Calu3 (cell line): ENCODE measurements at regions of chr3 and their contacts with region 1.

Region 1: DNA sequence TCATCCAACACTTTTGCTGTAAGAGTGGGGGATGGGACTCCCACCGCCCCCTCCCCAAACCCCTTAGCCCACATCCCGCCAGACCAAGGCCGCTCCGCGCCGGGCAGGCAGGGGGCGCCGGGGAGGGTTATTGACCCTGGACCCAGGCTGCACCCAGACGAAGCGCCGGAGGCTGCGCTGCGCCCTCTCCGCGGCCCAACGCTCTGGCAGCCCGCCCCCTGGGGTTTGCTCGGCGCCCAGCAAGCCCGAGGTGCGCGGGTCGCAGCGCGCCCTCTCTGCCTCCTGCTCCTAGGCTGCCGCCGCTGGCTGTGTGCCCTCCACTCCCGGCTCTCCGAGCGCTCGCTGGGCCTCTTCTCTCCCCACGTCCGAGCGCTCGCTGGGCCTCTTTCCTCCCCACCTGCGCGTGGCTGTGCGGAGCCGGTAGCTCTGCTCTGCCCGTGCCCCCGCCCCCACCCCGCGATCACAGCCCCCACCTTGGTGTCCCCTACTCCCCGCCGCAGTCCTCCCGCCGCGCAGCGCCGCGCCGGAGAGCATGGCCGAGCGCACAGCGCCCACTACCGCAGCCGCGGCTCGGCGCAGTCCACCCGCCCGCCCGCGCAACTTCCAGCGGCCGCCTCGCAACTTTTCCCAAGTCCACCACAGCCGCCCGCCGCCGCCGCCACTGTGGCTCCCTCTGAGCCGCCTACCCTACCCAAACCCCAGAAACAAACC is 1.2 kb downstream of the MECOM start:
- DNase-seq: peak; percentile 97
- H3K4me3 Mint-ChIP-seq: peak overlapping the region; percentile 79
- H3K27ac Mint-ChIP-seq: peak overlapping the region; percentile 60
- H3K4me1 Mint-ChIP-seq: peaks cover 53% of the 10 kb centered on the region
- H3K27me3 Mint-ChIP-seq: no peaks in the 10 kb centered on the region
- CTCF ChIP-seq: peak; percentile 88

Region 2: GRCh38 chr3:169241991-169242707 is 420.1 kb before region 1 on chr3:
- CTCF ChIA-PET with region 1: interaction called, 3 read pairs
- intact Hi-C with region 1: loop called (anchors 2 kb)
- DNase-seq: peak; percentile 52
- H3K4me3 Mint-ChIP-seq: peak overlapping the region; percentile 78
- H3K27ac Mint-ChIP-seq: peak overlapping the region; percentile 90
- H3K4me1 Mint-ChIP-seq: peaks cover 52% of the 10 kb centered on the region
- H3K27me3 Mint-ChIP-seq: no peaks in the 10 kb centered on the region
- CTCF ChIP-seq: no peak

Region 3: GRCh38 chr3:169348929-169349613 is 313.2 kb before region 1 on chr3:
- CTCF ChIA-PET with region 1: no interaction called
- intact Hi-C with region 1: loop called (anchors 2 kb)
- DNase-seq: peak; percentile 60
- H3K4me3 Mint-ChIP-seq: peak overlapping the region; percentile 65
- H3K27ac Mint-ChIP-seq: peak overlapping the region; percentile 96
- H3K4me1 Mint-ChIP-seq: peaks cover 74% of the 10 kb centered on the region
- H3K27me3 Mint-ChIP-seq: no peaks in the 10 kb centered on the region
- CTCF ChIP-seq: no peak

Region 4: GRCh38 chr3:169564883-169565282 is 97.4 kb before region 1 on chr3:
- CTCF ChIA-PET with region 1: interaction called, 6 read pairs
- intact Hi-C with region 1: loop called (anchors 2 kb)
- DNase-seq: peak; percentile 16
- H3K4me3 Mint-ChIP-seq: no peak overlapping the region
- H3K27ac Mint-ChIP-seq: no peak overlapping the region
- H3K4me1 Mint-ChIP-seq: peaks cover 25% of the 10 kb centered on the region
- H3K27me3 Mint-ChIP-seq: no peaks in the 10 kb centered on the region
- CTCF ChIP-seq: peak; percentile 65

Region 5: GRCh38 chr3:169604568-169604967 is 57.7 kb before region 1 on chr3:
- CTCF ChIA-PET with region 1: interaction called, 10 read pairs
- intact Hi-C with region 1: no loop called
- DNase-seq: peak; percentile 17
- H3K4me3 Mint-ChIP-seq: no peak overlapping the region
- H3K27ac Mint-ChIP-seq: no peak overlapping the region
- H3K4me1 Mint-ChIP-seq: peaks cover 42% of the 10 kb centered on the region
- H3K27me3 Mint-ChIP-seq: no peaks in the 10 kb centered on the region
- CTCF ChIP-seq: no peak

Region 6: GRCh38 chr3:169790687-169791429 is 128.6 kb after region 1 on chr3:
- CTCF ChIA-PET with region 1: no interaction called
- intact Hi-C with region 1: no loop called
- DNase-seq: no peak
- H3K4me3 Mint-ChIP-seq: no peak overlapping the region
- H3K27ac Mint-ChIP-seq: peak overlapping the region; percentile 2
- H3K4me1 Mint-ChIP-seq: no peaks in the 10 kb centered on the region
- H3K27me3 Mint-ChIP-seq: no peaks in the 10 kb centered on the region
- CTCF ChIP-seq: no peak